GM23248 (cell line): ENCODE measurements at regions of chr6 and their contacts with region 1.

Region 1: GRCh38 chr6:116279260-116280063 is at the start of gene TSPYL1:
- DNase-seq: peak; percentile 100
- H3K4me3 ChIP-seq: peak within 1 kb of the TSS; percentile 82
- H3K27ac ChIP-seq: peak within 1 kb of the TSS; percentile 91
- H3K4me1 ChIP-seq: peaks cover 47% of the 10 kb centered on the region
- H3K27me3 ChIP-seq: no peaks in the 10 kb centered on the region
- total RNA-seq, gene TSPYL1: 79.4 and 89.1 TPM in 2 replicates

Region 2: GRCh38 chr6:116424001-116424400 is 144.5 kb after region 1 on chr6:
- in situ Hi-C with region 1: loop called (anchors 10 kb)
- DNase-seq: peak; percentile 88
- H3K4me3 ChIP-seq: no peak overlapping the region
- H3K27ac ChIP-seq: peak overlapping the region; percentile 69
- H3K4me1 ChIP-seq: peaks cover 31% of the 10 kb centered on the region
- H3K27me3 ChIP-seq: no peaks in the 10 kb centered on the region